Aorta (tissue), 5 donors: ENCODE measurements at regions of chr15 and their contacts with region 1.

Region 1: GRCh38 chr15:34101366-34102175 is at the starts of genes EMC7 and PGBD4:
- DNase-seq: peak; percentile 99 to 100
- ATAC-seq: peak; percentile 100
- H3K4me3 ChIP-seq: peak within 1 kb of the TSS; percentile 69 to 80
- H3K27ac ChIP-seq: peak within 1 kb of the TSS; percentile 31 to 72
- H3K4me1 ChIP-seq: peaks cover 0 to 2% of the 10 kb centered on the region in 2 donors
- H3K27me3 ChIP-seq: no peaks in the 10 kb centered on the region
- total RNA-seq, gene EMC7: 53.5 to 60.1 TPM
- total RNA-seq, gene PGBD4: 1.7 TPM

Region 2: GRCh38 chr15:33852557-33852956 is 249.0 kb before region 1 on chr15:
- intact Hi-C with region 1: no loop called
- DNase-seq: no peak
- ATAC-seq: no peak
- H3K4me3 ChIP-seq: no peak overlapping the region
- H3K27ac ChIP-seq: peak overlapping the region in 1 of 2 donors; percentile 43
- H3K4me1 ChIP-seq: no peaks in the 10 kb centered on the region
- H3K27me3 ChIP-seq: no peaks in the 10 kb centered on the region

Region 3: GRCh38 chr15:34064438-34064837 is 37.1 kb before region 1 on chr15:
- intact Hi-C with region 1: loop called in 1 of 2 experiments (anchors 5 kb)
- DNase-seq: no peak
- ATAC-seq: no peak
- H3K4me3 ChIP-seq: no peak overlapping the region
- H3K27ac ChIP-seq: no peak overlapping the region
- H3K4me1 ChIP-seq: no peaks in the 10 kb centered on the region
- H3K27me3 ChIP-seq: no peaks in the 10 kb centered on the region

Region 4: DNA sequence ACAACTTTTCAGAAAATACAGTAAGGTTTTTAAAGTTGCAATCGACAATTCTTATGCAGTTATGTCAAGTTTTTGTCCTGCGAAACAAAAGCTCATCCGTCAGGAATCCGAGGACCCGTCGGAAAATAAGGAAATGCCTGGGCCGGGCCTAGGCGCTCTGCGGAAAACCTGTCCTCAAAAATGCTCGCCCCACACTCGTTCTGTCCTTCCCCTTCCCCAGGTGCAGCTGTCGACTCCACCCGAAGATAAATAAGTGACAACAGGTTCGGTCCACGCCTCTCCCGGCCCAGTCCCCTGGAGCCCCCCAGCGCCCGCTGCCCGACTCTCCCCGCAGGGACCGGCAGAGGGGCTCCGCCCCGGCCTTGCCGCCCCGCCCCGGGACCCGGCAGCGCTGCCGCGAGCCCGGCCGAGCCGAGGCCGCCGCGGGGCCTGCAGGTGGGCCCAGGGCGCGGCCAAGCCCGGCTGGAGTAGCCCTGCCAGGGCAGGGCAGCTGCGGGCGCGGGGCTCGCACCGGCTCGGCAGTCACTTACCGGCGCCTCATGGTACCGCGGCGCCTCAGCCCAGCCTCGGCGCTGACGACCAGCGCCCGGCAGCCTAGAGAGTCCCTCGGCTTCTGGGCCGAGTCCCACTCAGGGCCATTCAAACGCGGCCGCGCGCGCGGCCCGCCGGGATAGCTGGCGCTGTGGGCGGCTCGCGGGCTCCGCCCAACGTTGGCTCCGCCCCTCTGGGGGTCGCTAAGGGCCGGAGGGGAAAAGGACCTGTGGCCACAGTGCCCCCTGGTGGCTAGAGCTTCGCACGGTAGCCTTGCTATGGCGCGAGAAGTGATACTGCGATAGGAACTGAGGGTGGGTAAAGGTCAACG is 108.1 kb after region 1 on chr15 and contains the start of gene KATNBL1:
- intact Hi-C with region 1: loop called in 1 of 2 experiments (anchors 5 kb)
- DNase-seq: peak; percentile 98 to 100
- ATAC-seq: peak; percentile 99
- H3K4me3 ChIP-seq: peak within 1 kb of the TSS; percentile 68 to 87
- H3K27ac ChIP-seq: peak within 1 kb of the TSS; percentile 46
- H3K4me1 ChIP-seq: peaks cover 0 to 2% of the 10 kb centered on the region in 2 donors
- H3K27me3 ChIP-seq: no peaks in the 10 kb centered on the region
- total RNA-seq, gene KATNBL1: 64.5 to 64.7 TPM

Region 5: GRCh38 chr15:34223904-34224596 is 122.5 kb after region 1 on chr15:
- intact Hi-C with region 1: loop called in 1 of 2 experiments (anchors 2 kb)
- DNase-seq: no peak
- ATAC-seq: no peak
- H3K4me3 ChIP-seq: peak overlapping the region; percentile 43 to 51
- H3K27ac ChIP-seq: peak overlapping the region in 1 of 2 donors; percentile 87
- H3K4me1 ChIP-seq: peaks cover 0 to 2% of the 10 kb centered on the region in 2 donors
- H3K27me3 ChIP-seq: no peaks in the 10 kb centered on the region

Region 6: DNA sequence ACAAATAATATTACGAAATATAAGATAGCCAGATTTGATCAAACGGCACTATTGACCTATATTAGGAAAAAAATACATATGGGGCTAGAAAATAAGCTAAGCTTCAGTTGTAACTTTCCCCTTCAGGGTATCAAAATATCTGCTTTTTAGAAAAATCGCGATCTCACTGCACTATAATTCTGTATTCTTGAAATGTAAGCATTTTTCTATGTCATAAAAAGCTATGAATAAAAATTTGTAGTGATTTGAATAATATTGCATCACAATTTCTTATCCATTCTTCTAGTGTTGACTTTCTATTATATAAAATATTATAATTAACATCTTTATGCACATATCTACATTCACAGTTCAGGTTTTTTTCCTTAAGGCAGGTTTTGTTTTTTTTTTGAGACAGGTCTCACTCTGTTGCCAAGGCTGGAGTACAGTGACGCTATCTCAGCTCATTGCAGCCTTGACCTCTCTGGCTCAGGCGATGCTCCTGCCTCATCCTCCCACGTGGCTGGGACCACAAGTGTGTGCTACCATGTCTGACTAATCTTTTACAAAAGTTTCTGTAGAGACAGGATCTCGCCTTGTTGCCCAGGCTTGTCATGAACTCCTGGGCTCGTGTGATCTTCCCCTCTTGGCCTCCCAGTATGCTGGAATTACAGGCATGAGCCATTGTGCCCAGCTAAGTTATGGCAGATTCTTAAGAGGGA is 144.9 kb after region 1 on chr15:
- intact Hi-C with region 1: no loop called
- DNase-seq: no peak
- ATAC-seq: no peak
- H3K4me3 ChIP-seq: no peak overlapping the region
- H3K27ac ChIP-seq: no peak overlapping the region
- H3K4me1 ChIP-seq: no peaks in the 10 kb centered on the region
- H3K27me3 ChIP-seq: no peaks in the 10 kb centered on the region

Region 7: DNA sequence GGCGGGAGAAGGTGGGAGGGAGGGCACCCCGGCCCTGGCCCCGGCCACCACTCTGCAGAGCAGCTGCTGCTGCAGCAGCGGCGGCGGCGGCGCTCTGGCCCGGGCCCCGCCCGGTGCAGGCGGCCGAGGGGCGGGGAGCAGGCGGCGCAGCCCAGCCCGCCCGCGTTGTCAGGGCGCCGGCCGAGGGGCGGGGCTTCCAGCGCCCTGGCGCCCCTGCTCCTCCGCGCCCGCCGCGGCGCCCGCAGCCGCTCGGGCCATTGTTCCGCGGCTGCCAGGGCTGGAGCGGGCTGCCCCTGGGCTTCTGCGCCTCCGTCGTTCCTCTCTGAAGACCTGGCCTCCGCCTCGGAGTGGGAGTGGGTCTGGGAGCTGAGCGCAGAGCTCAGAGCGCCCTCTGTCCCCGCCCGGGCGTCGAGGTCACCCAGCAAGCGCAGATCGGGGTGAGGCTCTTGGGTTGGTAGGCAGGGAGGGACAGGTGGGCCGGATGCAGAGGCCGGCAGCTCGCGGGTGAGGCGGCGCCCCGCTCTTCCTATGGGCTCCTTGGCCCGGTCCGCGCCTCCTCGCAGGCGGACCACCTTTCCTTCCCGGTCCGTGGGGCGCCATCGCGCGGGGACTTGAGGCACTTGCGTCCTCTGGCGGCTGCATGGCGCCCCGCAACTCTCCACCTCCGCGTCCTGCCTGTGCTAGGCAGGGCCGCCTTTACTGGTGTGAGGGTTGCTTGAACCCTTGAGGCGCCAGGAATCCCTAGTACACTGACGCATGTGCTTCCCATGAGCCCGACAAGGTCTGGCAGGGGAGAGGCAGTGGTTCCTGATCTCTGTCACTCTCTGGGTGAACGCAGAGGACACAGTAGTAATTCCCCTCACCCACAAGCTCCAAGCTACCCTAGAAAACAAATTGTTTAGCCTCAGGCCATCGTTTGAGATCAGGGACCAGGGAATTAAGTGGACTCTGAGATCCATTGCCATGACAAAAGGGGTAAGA is 265.8 kb after region 1 on chr15 and contains the start of gene LPCAT4:
- intact Hi-C with region 1: loop called (anchors 10 kb)
- DNase-seq: peak; percentile 93 to 96
- ATAC-seq: peak; percentile 95
- H3K4me3 ChIP-seq: peak within 1 kb of the TSS; percentile 72 to 86
- H3K27ac ChIP-seq: peak within 1 kb of the TSS; percentile 34 to 92
- H3K4me1 ChIP-seq: no peaks in the 10 kb centered on the region
- H3K27me3 ChIP-seq: no peaks in the 10 kb centered on the region
- total RNA-seq, gene LPCAT4: 32.1 to 78.6 TPM